A549 (cell line): ENCODE measurements at regions of chr1 and their contacts with region 1.

Region 1: DNA sequence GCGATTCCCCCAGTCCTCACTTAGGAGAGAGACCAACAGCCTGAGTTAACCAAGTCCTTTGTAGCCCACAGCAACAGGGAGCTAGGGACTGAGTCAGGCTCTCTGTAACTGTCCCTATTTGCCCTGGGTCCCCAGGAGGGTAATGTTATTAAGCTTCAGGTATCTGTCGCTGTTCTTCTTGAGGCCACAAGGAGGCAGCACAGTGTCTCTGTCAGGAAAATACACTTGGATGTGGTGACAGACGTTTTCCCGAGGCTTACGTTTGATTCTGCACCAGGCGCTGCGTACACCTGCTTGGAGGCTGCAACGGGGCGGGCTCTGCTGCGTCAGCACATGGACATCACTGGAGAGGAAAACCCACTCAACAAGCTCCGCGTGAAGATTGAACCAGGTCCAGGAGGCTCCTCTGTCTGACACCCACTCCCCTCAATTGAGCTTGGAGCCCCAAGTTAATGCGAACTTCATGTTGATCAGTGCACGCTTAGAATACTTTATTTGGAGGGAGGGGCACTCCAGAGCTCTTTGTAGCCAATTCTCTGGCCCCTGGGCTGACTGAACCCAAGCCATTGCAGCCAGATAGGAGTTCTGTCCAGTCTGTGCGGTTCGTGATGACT is 10.7 kb upstream of the ELF3 start:
- DNase-seq: peak; percentile 83 to 89
- ATAC-seq: peak; percentile 70 to 86; a peak in 5 of 6 replicates
- H3K4me3 ChIP-seq: no peak overlapping the region
- H3K27ac ChIP-seq: no peak overlapping the region
- H3K4me1 ChIP-seq: no peaks in the 10 kb centered on the region
- CTCF ChIP-seq: peak; percentile 80
- EP300 ChIP-seq: no peak
- POLR2A ChIP-seq: no peak
- RAD21 ChIP-seq: peak; percentile 72 to 81

Region 2: DNA sequence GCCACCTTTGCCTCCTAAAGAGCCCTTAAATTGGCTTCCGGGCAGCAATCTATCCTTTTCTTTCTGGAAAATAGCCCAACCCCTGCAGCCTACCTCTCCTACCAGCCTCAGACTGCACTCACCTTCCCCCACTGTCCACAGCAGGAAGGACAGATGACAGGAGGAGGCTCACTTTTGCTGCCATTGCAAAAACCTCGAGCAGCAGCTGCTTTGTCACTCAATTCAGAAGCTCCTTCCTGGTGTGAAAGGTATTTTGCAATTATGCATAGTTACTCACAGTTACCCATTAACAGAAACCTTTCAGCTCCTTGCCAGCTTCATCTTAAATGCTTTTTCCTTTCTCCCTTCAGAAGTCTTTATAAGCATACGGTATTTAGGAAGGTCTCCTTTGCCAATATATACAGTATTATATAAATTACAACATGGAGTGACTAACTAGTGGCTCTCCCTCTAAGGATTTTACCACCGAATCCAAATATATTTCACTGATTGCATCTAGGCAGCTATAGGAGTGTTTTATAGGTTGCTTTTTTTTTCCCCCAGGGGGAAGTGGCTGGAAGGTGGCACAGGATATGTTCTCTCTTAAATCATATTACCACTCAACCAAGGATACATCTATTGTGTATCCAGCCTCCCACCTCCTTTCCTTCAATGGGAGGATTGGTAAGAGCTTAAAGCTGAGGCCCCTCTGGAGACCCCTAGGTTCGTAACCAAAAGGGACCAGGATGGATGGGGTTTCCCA is 312.8 kb before region 1 on chr1:
- CTCF ChIA-PET with region 1: no interaction called
- POLR2A ChIA-PET with region 1: no interaction called
- DNase-seq: peak; percentile 22 to 33
- ATAC-seq: peak; percentile 30 to 56; a peak in 3 of 6 replicates
- H3K4me3 ChIP-seq: no peak overlapping the region
- H3K27ac ChIP-seq: peak overlapping the region in 1 of 2 experiments; percentile 48; a peak in 3 of 6 replicates
- H3K4me1 ChIP-seq: peaks cover 15% of the 10 kb centered on the region
- CTCF ChIP-seq: no peak
- EP300 ChIP-seq: no peak
- POLR2A ChIP-seq: no peak
- RAD21 ChIP-seq: no peak

Region 3: DNA sequence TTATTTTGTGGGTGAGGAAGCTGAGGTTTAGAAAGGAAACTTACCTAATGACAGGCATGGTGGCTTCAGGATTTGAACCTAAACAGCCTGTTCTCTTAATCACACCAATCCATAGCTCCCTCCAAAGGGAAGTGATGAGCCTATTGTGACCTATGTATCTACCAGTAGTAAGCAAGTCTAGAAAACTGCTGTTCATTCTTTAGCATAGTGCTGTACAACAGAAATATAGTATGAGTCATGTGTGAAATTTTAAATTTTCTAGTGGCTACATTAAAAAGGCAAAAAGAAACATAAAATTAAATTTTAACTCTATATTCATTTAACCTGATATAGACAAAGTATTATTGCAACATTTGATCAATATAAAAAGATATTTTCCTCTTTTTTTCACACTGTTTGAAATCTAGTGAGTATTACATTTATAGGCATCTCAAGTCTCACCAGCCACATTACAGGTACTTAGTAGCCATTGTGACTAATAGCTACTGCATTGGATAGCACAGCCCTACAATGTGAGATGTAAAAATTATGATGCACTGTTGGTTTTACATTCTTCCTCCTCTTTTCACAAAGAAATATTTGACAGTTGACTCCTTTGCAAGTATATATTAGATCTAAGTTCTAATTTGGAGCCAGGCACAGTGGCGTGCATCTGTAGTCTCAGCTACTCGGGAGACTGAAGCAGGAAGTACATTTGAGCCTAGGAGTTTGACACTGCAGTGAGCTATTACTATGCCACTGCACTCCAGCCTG is 154.2 kb before region 1 on chr1:
- CTCF ChIA-PET with region 1: no interaction called
- POLR2A ChIA-PET with region 1: no interaction called
- DNase-seq: no peak
- ATAC-seq: 0 out of 6 replicates have a peak, but pooled peaks of 1 of the 2 experiments have one; percentile 51
- H3K4me3 ChIP-seq: no peak overlapping the region
- H3K27ac ChIP-seq: no peak overlapping the region
- H3K4me1 ChIP-seq: peaks cover 24% of the 10 kb centered on the region
- CTCF ChIP-seq: no peak
- EP300 ChIP-seq: no peak
- POLR2A ChIP-seq: no peak
- RAD21 ChIP-seq: no peak

Region 4: DNA sequence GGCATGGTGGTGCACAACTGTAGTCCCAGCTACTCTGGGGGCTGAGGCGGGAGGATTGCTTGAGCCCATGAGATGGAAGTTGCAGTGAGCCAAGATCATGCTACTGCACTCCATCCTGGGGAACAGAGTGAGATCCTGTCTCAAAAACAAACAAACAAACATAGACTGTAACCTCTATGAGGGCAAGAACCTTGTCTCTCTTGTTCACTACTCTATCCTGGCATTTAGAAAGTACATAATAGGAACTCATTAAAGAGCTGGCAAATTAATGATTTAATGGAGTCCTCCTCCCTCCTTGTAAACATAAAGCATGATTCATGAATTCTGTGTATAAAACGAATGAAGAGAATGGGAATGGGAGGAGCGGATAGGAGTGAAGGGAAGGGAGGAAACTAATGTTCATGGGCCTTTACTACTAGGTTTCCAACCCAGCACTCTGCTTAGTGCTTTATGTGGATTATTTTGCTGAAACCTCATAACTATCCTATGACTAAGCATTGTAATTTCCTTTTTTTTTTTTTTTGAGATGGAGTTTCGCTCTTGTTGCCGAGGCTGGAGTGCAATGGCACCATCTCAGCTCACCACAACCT is 62.0 kb before region 1 on chr1:
- CTCF ChIA-PET with region 1: no interaction called
- POLR2A ChIA-PET with region 1: no interaction called
- DNase-seq: no peak
- ATAC-seq: no peak; a peak in 1 of 6 replicates
- H3K4me3 ChIP-seq: no peak overlapping the region
- H3K27ac ChIP-seq: no peak overlapping the region
- H3K4me1 ChIP-seq: peaks cover 4% of the 10 kb centered on the region; the same call in 1 of the 3 replicates
- CTCF ChIP-seq: no peak
- EP300 ChIP-seq: no peak
- POLR2A ChIP-seq: no peak
- RAD21 ChIP-seq: no peak

Region 5: GRCh38 chr1:201955009-201955728 is 44.6 kb before region 1 on chr1 and contains the start of gene TIMM17A:
- CTCF ChIA-PET with region 1: no interaction called
- POLR2A ChIA-PET with region 1: no interaction called
- DNase-seq: peak; percentile 93 to 98
- ATAC-seq: peak; percentile 100
- H3K4me3 ChIP-seq: peak within 1 kb of the TSS; percentile 96
- H3K27ac ChIP-seq: peak within 1 kb of the TSS; percentile 91 to 93
- H3K4me1 ChIP-seq: peaks cover 12% of the 10 kb centered on the region; the same call in 2 of the 3 replicates
- CTCF ChIP-seq: no peak
- EP300 ChIP-seq: no peak
- POLR2A ChIP-seq: peak; percentile 83
- RAD21 ChIP-seq: no peak
- polyA plus RNA-seq, gene TIMM17A: 96.2 and 127 TPM in 2 replicates

Region 6: GRCh38 chr1:201982623-201983379 is 16.9 kb before region 1 on chr1 and contains the start of gene RNPEP:
- CTCF ChIA-PET with region 1: interaction called, 99 read pairs
- POLR2A ChIA-PET with region 1: no interaction called
- DNase-seq: peak; percentile 82 to 88
- ATAC-seq: peak; percentile 91 to 93
- H3K4me3 ChIP-seq: peak within 1 kb of the TSS; percentile 60
- H3K27ac ChIP-seq: peak within 1 kb of the TSS; percentile 88 to 97
- H3K4me1 ChIP-seq: peaks cover 14% of the 10 kb centered on the region
- CTCF ChIP-seq: no peak; the same call in none of the 3 replicates
- EP300 ChIP-seq: no peak
- POLR2A ChIP-seq: peak; percentile 88
- RAD21 ChIP-seq: no peak
- polyA plus RNA-seq, gene RNPEP: 80.4 and 87.6 TPM in 2 replicates

Region 7: GRCh38 chr1:202018468-202019255 is 18.9 kb after region 1 on chr1:
- CTCF ChIA-PET with region 1: interaction called, 108 read pairs
- POLR2A ChIA-PET with region 1: no interaction called
- DNase-seq: peak; percentile 81 to 99
- ATAC-seq: peak; percentile 71
- H3K4me3 ChIP-seq: peak overlapping the region; percentile 23; the same call in 2 of the 3 replicates
- H3K27ac ChIP-seq: peak overlapping the region; percentile 93 to 94
- H3K4me1 ChIP-seq: peaks cover 91% of the 10 kb centered on the region
- CTCF ChIP-seq: no peak
- EP300 ChIP-seq: peak; percentile 89 to 90; a peak in 3 of 5 replicates
- POLR2A ChIP-seq: no peak
- RAD21 ChIP-seq: peak; percentile 26 to 68; a peak in 4 of 5 replicates

Region 8: DNA sequence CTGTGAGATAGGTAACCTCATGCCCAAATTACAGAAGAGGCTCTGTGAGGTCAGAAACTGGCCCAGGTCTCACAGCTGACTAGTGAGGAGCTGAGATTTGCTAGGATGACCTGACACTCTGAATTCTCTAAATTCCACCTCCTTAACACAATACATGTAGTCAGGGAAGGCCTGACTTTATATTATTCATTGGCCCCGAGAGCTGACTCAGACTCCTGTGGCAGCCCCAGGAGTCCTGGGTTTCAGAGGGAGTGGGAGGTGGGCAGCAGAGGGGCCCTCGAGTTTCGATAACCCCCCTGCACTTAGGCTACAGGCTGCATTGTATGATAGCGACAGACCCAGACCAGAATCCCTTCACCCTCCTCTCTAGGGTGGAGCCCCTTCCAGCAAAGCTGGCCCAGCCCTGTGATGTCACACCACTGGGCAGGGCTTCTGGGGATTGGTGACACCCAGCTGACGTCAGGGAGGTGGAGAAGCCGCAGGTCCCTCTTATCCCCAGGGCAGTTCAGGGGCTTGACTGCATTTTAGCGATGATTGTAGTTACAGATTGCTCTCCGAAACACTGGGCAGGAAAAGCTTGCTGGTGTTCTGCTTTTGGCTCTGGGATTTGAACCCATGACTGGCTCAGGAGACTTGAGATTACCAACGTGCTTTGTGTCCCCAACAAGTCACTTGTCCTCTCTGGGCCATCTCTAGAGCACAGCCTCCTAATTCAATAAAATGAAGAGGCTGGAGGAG is 106.0 kb after region 1 on chr1:
- CTCF ChIA-PET with region 1: interaction called, 1,624 read pairs
- POLR2A ChIA-PET with region 1: interaction called, 5 read pairs
- DNase-seq: peak; percentile 91 to 93
- ATAC-seq: peak; percentile 85 to 89
- H3K4me3 ChIP-seq: no peak overlapping the region
- H3K27ac ChIP-seq: peak overlapping the region; percentile 91 to 94
- H3K4me1 ChIP-seq: peaks cover 66% of the 10 kb centered on the region
- CTCF ChIP-seq: no peak
- EP300 ChIP-seq: no peak
- POLR2A ChIP-seq: no peak
- RAD21 ChIP-seq: 0 out of 5 replicates have a peak, but pooled peaks of 1 of the 2 experiments have one; percentile 11

Region 9: DNA sequence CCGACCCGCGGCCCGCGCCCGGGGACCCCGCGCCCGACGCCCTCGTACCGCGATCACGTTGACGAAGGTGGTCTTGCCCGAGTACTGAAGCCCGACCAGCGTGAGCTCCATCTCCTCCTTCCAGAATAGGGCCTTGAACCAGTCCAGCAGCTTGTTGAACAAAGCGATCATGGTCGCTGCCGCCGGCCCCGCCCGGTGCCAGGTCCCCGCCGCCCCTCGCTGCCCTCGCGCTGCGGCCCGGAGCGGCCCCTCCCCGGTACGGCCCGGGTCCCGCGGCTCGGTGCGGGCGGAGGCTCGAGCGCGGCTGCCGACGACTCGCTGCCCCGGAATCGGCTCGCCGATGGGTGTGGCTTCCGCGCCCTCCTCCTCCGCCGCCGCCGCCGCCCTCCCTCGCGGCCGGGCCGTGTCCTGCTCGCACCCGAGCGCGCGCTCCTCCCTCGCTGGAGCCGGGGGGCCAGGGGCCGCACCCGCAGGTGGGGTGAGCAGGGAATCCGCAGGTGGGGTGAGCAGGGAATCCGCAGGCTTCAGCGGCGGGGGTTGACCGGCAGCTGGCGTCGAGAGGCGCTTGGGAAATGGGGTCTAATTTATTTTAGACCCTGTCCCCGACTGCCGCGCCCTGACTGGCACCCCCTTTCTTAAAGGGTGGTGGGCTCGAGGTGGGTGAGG is 144.8 kb after region 1 on chr1 and contains the start of gene ARL8A:
- CTCF ChIA-PET with region 1: interaction called, 1,624 read pairs
- POLR2A ChIA-PET with region 1: interaction called, 5 read pairs
- DNase-seq: peak; percentile 36 to 68
- ATAC-seq: peak; percentile 80 to 81
- H3K4me3 ChIP-seq: peak within 1 kb of the TSS; percentile 94
- H3K27ac ChIP-seq: peak within 1 kb of the TSS; percentile 95 to 98
- H3K4me1 ChIP-seq: peaks cover 13% of the 10 kb centered on the region; the same call in 2 of the 3 replicates
- CTCF ChIP-seq: no peak
- EP300 ChIP-seq: no peak
- POLR2A ChIP-seq: peak; percentile 74
- RAD21 ChIP-seq: no peak
- polyA plus RNA-seq, gene ARL8A: 49.8 and 57.8 TPM in 2 replicates